WTC11 (cell line): ENCODE measurements at regions of chr11 and their contacts with region 1.

Region 1: GRCh38 chr11:119363851-119364590 is 17.5 kb downstream of the USP2 start:
- DNase-seq: peak; percentile 68
- ATAC-seq: peak; percentile 72
- H3K4me3 Mint-ChIP-seq: peak overlapping the region; percentile 69
- H3K27ac Mint-ChIP-seq: no peak overlapping the region
- H3K4me1 Mint-ChIP-seq: peaks cover 50% of the 10 kb centered on the region
- H3K27me3 Mint-ChIP-seq: peaks cover 49% of the 10 kb centered on the region
- CTCF ChIP-seq: no peak

Region 2: DNA sequence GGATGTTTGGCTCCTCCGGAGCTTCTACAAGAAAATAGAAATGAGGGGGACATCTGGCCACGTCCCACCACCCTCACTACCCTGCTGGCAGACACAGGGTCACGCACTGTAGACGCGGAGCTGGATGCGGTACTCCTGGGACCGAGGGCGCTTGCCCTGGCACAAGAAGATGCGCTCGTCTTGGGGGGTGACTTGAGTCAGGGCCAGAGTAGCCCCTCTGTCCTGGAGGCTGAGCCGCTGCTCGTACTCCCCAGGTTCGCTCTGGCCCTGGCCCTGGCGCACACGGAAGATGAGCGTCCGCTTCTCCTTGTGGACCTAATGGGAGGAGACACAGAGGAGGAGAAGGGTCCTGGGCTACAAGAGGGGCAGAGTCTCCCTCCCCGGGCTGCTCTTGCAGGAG is 49.3 kb before region 1 on chr11:
- CTCF ChIA-PET with region 1: no interaction called
- POLR2A ChIA-PET with region 1: no interaction called
- DNase-seq: no peak
- ATAC-seq: no peak
- H3K4me3 Mint-ChIP-seq: peak overlapping the region; percentile 69
- H3K27ac Mint-ChIP-seq: no peak overlapping the region
- H3K4me1 Mint-ChIP-seq: peaks cover 33% of the 10 kb centered on the region
- H3K27me3 Mint-ChIP-seq: peaks cover 44% of the 10 kb centered on the region
- CTCF ChIP-seq: no peak

Region 3: DNA sequence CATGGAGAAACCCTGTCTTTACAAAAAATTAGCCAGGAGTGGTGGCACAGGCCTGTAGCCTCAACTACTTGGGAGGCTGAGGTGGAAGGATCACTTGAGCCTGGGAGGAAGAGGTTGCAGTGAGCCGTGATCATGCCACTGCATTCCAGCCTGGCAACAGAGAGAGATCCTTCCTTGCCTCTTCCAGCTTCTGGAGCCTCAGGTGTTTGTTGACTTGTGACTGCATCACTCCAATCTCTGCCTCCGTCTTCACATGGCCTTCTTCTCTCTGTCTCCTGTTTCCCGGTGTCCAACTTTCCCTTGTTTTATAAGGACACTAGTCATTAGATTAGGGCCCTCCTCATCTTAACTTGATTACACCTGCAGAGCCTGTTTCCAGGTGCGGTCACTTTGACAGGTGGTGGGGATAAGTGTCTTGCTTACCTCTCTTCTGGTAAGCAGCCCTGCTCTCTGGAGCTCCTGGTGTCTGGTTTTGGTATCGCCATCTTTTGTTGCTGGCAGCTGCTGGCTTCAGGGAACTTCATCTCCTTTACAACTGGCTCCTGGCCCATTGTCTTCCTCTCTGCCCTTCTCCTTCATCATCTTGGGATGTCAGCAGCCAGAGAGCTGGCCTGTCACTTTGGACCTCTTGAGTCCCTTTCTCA is 25.7 kb after region 1 on chr11:
- CTCF ChIA-PET with region 1: interaction called, 13 read pairs
- POLR2A ChIA-PET with region 1: no interaction called
- DNase-seq: peak; percentile 79
- ATAC-seq: peak; percentile 98
- H3K4me3 Mint-ChIP-seq: no peak overlapping the region
- H3K27ac Mint-ChIP-seq: no peak overlapping the region
- H3K4me1 Mint-ChIP-seq: peaks cover under 1% of the 10 kb centered on the region
- H3K27me3 Mint-ChIP-seq: no peaks in the 10 kb centered on the region
- CTCF ChIP-seq: peak; percentile 33; the same call in 1 of the 2 replicates